ENCODE measurements at regions of chr11 and their contacts with region 1.

Region 1: GRCh38 chr11:4072668-4073285 is 21.8 kb upstream of the RRM1 start:
- DNase-seq: peak; percentile 68 to 76
- H3K4me3 ChIP-seq: no peak overlapping the region
- H3K4me1 ChIP-seq: no peaks in the 10 kb centered on the region
- H3K27me3 ChIP-seq: no peaks in the 10 kb centered on the region

Region 2: GRCh38 chr11:3849297-3849874 is 223.4 kb before region 1 on chr11:
- in situ Hi-C with region 1: loop called (anchors 5 kb)
- DNase-seq: peak; percentile 19 to 66
- H3K4me3 ChIP-seq: no peak overlapping the region
- H3K4me1 ChIP-seq: peaks cover 4% of the 10 kb centered on the region
- H3K27me3 ChIP-seq: no peaks in the 10 kb centered on the region